Activated CD4-positive, alpha-beta memory T cell treated with anti-CD3 and anti-CD28 coated beads, Interleukin-2, amount 10 ng/mL, durations not matched to agents 7 days and 5 days (primary cell): ENCODE measurements at regions of chr10 and their contacts with region 1.

Region 1: DNA sequence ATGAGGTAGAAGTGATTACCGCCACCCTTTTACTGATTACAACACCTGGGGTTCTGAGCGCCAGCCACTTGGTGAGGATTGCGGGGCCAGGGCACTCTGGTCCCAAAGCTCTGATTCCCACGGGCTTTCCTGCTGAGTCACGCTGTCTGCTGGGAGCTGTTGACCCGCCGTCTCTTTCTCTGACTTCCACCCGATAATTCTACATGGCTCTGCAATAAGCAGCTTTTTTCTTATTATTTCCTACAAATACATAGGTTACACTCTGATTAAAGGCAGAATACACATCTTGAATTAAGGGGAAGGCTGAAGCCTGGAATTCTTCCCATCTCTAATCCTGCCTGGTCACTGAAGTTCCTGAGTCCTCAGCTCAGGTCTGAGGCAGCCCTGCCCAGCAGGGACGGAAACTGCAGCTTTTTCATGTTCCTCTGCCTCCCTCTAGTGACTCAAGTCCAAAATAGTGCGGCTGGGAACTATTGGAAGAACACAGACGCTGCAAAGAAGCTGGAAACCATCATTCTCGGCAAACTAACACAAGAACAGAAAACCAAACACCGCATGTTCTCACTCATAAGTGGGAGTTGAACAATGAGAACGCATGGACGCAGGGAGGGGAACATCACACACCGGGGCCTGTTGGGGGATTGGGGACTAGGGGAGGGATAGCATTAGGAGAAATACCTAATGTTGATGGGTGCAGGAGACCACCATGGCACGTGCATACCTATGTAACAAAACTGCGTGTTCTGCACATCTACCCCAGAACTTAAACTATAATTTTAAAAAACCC is 178.3 kb downstream of the PRKCQ start:
- DNase-seq: peak; percentile 63
- H3K4me3 Mint-ChIP-seq: no peak overlapping the region
- H3K27ac Mint-ChIP-seq: no peak overlapping the region
- H3K4me1 Mint-ChIP-seq: peaks cover 30% of the 10 kb centered on the region
- H3K27me3 Mint-ChIP-seq: peaks cover 13% of the 10 kb centered on the region

Region 2: DNA sequence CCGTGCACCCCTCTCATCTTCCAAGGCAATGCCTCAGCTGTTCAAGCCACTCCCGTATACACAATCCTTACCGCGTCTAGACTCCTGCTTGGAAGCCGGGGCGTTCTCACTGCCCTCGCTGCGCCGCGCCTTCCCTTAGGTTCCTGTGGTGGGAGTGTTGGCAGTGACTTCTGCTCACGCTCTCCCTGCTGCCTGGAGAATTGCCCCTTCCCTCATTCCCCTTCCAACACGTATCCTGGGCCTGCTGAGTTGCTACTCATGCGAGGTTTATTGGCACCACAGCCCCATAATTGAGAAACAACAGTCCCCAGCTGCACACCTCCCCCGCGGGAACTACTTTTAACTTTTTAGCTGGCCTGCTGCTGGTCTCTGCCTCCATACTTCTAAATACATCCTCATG is 281.1 kb before region 1 on chr10:
- CTCF ChIA-PET with region 1: interaction called, 10 read pairs
- POLR2A ChIA-PET with region 1: no interaction called
- DNase-seq: no peak
- H3K4me3 Mint-ChIP-seq: no peak overlapping the region
- H3K27ac Mint-ChIP-seq: no peak overlapping the region
- H3K4me1 Mint-ChIP-seq: peaks cover 17% of the 10 kb centered on the region
- H3K27me3 Mint-ChIP-seq: no peaks in the 10 kb centered on the region

Region 3: GRCh38 chr10:6171881-6172695 is 229.7 kb before region 1 on chr10:
- CTCF ChIA-PET with region 1: interaction called, 48 read pairs
- POLR2A ChIA-PET with region 1: interaction called, 4 read pairs
- DNase-seq: no peak
- H3K4me3 Mint-ChIP-seq: no peak overlapping the region
- H3K27ac Mint-ChIP-seq: peak overlapping the region; percentile 12
- H3K4me1 Mint-ChIP-seq: peaks cover 71% of the 10 kb centered on the region
- H3K27me3 Mint-ChIP-seq: no peaks in the 10 kb centered on the region

Region 4: DNA sequence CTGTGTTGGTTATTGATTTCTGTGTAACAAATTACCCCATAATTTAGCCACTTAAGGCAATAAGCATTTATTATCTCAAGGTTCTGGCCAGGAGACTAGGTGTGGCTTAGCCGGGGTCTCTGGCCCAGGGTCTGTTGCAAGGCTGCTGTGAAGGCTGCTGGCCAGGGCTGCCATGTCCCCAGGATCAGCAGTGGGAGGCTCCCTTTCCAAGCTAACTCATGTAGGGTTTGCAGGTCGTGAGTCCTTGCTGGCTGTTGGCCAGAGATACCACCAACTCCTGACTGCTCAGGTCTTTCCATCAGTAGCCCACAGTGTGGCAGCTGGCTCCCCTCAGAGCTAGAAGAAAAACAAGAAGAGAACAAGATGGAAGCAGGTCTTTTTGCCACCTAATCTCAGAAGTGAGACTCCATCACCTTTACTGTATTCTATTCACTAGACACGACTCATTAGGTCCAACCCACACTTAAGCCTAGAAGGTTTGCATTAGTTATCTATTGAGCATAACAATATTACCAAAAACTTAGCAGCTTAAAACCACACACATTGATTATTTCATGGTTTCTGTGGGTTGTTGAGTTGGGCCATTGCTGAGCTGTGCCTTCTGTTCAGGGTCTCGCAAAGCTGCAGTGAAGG is 13.4 kb before region 1 on chr10:
- CTCF ChIA-PET with region 1: interaction called, 30 read pairs
- POLR2A ChIA-PET with region 1: no interaction called
- DNase-seq: no peak
- H3K4me3 Mint-ChIP-seq: no peak overlapping the region
- H3K27ac Mint-ChIP-seq: no peak overlapping the region
- H3K4me1 Mint-ChIP-seq: no peaks in the 10 kb centered on the region
- H3K27me3 Mint-ChIP-seq: no peaks in the 10 kb centered on the region

Region 5: GRCh38 chr10:6491841-6492609 is 90.3 kb after region 1 on chr10:
- CTCF ChIA-PET with region 1: no interaction called
- POLR2A ChIA-PET with region 1: no interaction called
- DNase-seq: peak; percentile 52
- H3K4me3 Mint-ChIP-seq: no peak overlapping the region
- H3K27ac Mint-ChIP-seq: peak overlapping the region; percentile 97
- H3K4me1 Mint-ChIP-seq: peaks cover 36% of the 10 kb centered on the region
- H3K27me3 Mint-ChIP-seq: no peaks in the 10 kb centered on the region

Region 6: DNA sequence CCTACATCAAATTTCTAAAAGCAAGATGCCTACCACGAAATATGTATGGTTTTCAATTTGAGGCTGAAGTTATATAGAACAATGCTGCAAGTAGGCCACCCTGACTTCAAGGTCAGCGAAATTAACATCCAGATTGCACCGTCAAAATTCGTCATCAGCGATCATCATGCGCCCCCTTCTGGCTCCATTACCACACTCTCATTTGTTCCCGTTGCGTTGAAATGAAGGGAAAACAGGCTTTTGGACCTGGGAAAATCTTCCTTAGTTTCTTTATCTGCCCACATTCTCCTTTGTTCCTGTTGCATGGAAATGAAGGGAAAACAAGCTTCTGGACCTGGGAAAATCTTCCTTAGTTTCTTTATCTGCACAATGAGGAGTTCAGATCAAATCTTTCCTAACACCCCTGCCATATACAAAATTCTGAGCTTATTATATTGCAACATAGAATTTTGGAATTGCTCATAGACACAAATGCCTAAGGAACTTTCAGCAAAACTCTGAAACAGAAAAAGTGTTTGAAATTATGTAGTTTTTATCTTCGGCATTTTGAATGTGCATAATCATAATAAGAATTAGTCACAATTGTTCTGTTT is 276.6 kb after region 1 on chr10:
- CTCF ChIA-PET with region 1: interaction called, 12 read pairs
- POLR2A ChIA-PET with region 1: no interaction called
- DNase-seq: peak; percentile 69
- H3K4me3 Mint-ChIP-seq: no peak overlapping the region
- H3K27ac Mint-ChIP-seq: no peak overlapping the region
- H3K4me1 Mint-ChIP-seq: peaks cover 10% of the 10 kb centered on the region
- H3K27me3 Mint-ChIP-seq: peaks cover 53% of the 10 kb centered on the region